ENCODE measurements at regions of chr15 and their contacts with region 1.

Region 1: DNA sequence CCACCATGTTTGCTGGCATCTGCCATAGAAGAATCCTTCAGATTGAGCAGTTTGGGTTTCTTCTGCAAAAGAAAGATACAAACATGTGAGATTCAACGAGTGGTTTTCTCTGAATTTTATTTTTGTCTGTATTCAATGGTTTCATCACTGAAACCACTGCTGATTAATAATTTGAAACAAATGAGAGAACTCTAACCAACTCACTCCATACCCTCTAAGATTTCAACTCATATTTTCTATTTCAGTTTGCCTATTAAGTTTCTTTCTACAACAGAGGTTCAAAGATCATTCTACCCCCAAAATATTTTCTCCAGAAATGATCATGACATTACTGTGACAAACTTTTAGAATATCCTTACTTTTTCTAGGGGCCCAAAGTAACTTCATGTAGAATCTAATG is 38.7 kb upstream of the MAN2C1 start:
- DNase-seq: no peak
- ATAC-seq: peak; percentile 51
- H3K4me3 ChIP-seq: no peak overlapping the region
- H3K27ac ChIP-seq: no peak overlapping the region
- H3K4me1 ChIP-seq: no peaks in the 10 kb centered on the region
- H3K27me3 ChIP-seq: no peaks in the 10 kb centered on the region
- CTCF ChIP-seq: no peak
- EP300 ChIP-seq: no peak
- POLR2A ChIP-seq: no peak
- RAD21 ChIP-seq: no peak

Region 2: GRCh38 chr15:75446151-75446550 is 39.1 kb after region 1 on chr15:
- CTCF ChIA-PET with region 1: no interaction called
- POLR2A ChIA-PET with region 1: interaction called, 11 read pairs
- RAD21 ChIA-PET with region 1: no interaction called
- SMC1A ChIA-PET with region 1: interaction called, 3 read pairs
- in situ Hi-C with region 1: no loop called
- intact Hi-C with region 1: no loop called
- DNase-seq: peak; percentile 11
- ATAC-seq: no peak
- H3K4me3 ChIP-seq: peak overlapping the region; percentile 13; the same call in 1 of the 2 replicates
- H3K27ac ChIP-seq: peak overlapping the region; percentile 23
- H3K4me1 ChIP-seq: peaks cover 25% of the 10 kb centered on the region
- H3K27me3 ChIP-seq: no peaks in the 10 kb centered on the region
- CTCF ChIP-seq: no peak
- EP300 ChIP-seq: no peak
- POLR2A ChIP-seq: no peak
- RAD21 ChIP-seq: no peak